ENCODE measurements at regions of chr4 and their contacts with region 1.

Region 1: DNA sequence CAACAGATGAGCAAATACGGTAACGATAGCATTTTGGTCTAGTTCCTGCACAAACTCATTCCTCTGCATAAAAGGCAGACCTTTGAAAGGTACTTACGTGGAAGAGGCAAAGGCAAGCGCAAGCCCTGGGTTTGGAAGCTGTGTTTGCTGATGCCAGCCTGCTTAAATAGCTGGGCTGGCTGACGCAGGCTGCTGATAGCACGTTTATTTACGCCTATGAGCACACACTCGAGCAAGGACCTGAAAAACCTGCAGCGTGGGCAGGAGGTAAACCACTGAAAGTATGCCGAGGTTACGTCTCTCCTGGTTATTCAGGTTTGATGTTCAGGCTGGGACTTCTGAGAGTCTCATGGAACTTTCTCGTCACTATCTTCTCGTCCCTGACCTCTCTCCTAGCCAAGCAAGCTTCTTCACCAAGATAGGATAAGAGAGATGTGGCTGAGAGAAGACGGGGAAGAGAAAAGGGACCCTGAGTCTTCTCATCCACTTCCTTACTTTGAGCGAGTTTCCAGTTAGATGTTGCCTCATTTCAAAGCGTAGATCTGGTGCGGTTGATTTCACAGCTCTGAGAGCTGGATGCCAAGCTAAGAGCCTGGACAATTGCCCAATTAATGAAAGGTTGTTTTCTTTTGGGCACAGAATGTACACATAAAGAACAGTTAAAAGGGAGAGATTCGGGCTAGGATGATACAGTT is at the start of gene HOPX:
- DNase-seq: peak; percentile 20
- H3K4me3 Mint-ChIP-seq: peak within 1 kb of the TSS; percentile 57
- H3K27ac Mint-ChIP-seq: peak within 1 kb of the TSS; percentile 5
- H3K4me1 Mint-ChIP-seq: peaks cover 41% of the 10 kb centered on the region
- H3K27me3 Mint-ChIP-seq: peaks cover 65% of the 10 kb centered on the region
- total RNA-seq, gene HOPX: 121 and 128 TPM in 2 replicates

Region 2: DNA sequence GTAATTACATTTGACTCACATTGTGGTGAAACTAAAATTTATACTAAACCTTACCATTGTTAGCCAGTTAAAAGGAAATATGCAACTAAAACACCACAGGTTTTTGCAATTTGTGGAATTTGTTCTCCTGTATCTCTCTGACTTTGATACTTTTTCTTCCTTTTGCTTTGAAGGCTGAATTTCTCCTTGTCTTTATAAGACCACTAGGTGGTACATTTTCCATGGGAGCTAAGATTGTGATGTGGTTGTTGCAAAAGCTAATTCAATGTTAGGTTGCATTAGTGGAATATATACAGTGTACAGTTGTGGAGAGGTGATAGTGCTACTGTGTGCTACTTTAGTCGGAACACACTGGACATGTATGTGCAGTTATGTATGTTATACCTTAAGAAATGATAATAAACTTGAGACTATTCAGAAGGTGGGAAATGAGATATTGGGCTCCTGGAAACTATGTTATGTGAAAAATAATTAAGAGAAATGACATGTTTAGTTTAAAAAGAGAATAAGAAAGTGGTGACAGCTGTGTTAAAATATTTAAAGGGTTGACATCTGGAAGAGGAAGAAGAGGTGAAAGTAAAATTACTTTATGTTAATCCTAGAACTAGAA is 105.4 kb before region 1 on chr4:
- intact Hi-C with region 1: loop called (anchors 5 kb)
- DNase-seq: no peak
- H3K4me3 Mint-ChIP-seq: no peak overlapping the region
- H3K27ac Mint-ChIP-seq: no peak overlapping the region
- H3K4me1 Mint-ChIP-seq: no peaks in the 10 kb centered on the region
- H3K27me3 Mint-ChIP-seq: peaks cover 11% of the 10 kb centered on the region

Region 3: GRCh38 chr4:56648021-56648823 is 33.1 kb before region 1 on chr4:
- intact Hi-C with region 1: loop called (anchors 1 kb)
- DNase-seq: no peak
- H3K4me3 Mint-ChIP-seq: peak overlapping the region; percentile 50
- H3K27ac Mint-ChIP-seq: peak overlapping the region; percentile 87
- H3K4me1 Mint-ChIP-seq: peaks cover 62% of the 10 kb centered on the region
- H3K27me3 Mint-ChIP-seq: peaks cover 2% of the 10 kb centered on the region

Region 4: DNA sequence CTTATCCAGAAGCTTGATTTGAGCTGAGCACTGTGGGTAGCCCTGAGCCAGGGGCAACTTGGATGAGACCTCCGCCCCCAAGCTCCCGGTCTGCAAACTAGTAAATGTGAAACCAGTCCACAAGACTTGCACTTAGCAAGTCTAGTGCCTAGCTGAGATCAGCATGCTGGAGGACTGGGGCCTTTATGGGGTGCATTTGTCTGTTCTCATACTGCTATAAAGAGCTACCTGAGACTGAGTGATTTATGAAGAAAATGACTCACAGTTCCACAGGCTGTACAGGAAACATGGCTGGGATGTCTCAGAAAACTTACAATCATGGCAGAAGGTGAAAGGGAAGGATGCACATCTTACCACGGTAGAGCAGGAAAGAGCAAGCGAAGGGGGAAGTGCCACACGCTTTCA is 41.9 kb after region 1 on chr4:
- intact Hi-C with region 1: loop called (anchors 1 kb)
- DNase-seq: peak; percentile 8
- H3K4me3 Mint-ChIP-seq: no peak overlapping the region
- H3K27ac Mint-ChIP-seq: peak overlapping the region; percentile 11
- H3K4me1 Mint-ChIP-seq: peaks cover 24% of the 10 kb centered on the region
- H3K27me3 Mint-ChIP-seq: no peaks in the 10 kb centered on the region

Region 5: GRCh38 chr4:56757821-56758411 is 76.6 kb after region 1 on chr4:
- intact Hi-C with region 1: loop called (anchors 1 kb)
- DNase-seq: peak; percentile 70
- H3K4me3 Mint-ChIP-seq: peak overlapping the region; percentile 74
- H3K27ac Mint-ChIP-seq: peak overlapping the region; percentile 98
- H3K4me1 Mint-ChIP-seq: peaks cover 48% of the 10 kb centered on the region
- H3K27me3 Mint-ChIP-seq: peaks cover 2% of the 10 kb centered on the region

Region 6: DNA sequence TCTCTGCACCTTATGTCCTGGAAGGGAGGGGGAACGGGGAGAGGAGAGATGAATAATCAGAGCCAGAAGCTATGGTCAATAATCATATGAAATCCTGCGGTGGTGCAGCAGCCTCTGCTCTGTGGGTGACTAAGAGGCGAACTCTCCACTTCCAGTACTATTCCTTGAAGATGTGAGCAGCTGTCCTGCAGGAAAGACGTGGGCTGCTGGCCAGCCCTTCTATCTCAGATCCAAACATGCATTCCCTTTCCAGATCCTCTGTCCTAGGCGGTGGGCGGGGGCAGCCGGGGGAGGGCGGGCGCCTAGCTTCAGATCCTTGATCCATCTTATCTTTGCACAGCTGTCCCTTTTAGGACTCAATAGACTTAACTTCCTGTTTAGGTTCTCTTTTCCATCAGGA is 105.7 kb after region 1 on chr4:
- intact Hi-C with region 1: no loop called
- DNase-seq: no peak
- H3K4me3 Mint-ChIP-seq: no peak overlapping the region
- H3K27ac Mint-ChIP-seq: no peak overlapping the region
- H3K4me1 Mint-ChIP-seq: no peaks in the 10 kb centered on the region
- H3K27me3 Mint-ChIP-seq: peaks cover 3% of the 10 kb centered on the region

Region 7: GRCh38 chr4:56821381-56822243 is 140.3 kb after region 1 on chr4 and contains the start of gene SPINK2:
- intact Hi-C with region 1: loop called (anchors 1 kb)
- DNase-seq: peak; percentile 44
- H3K4me3 Mint-ChIP-seq: peak within 1 kb of the TSS; percentile 45
- H3K27ac Mint-ChIP-seq: no peak within 1 kb of the TSS
- H3K4me1 Mint-ChIP-seq: peaks cover 29% of the 10 kb centered on the region
- H3K27me3 Mint-ChIP-seq: peaks cover 50% of the 10 kb centered on the region
- total RNA-seq, gene SPINK2: not detected in 2 replicates

Region 8: DNA sequence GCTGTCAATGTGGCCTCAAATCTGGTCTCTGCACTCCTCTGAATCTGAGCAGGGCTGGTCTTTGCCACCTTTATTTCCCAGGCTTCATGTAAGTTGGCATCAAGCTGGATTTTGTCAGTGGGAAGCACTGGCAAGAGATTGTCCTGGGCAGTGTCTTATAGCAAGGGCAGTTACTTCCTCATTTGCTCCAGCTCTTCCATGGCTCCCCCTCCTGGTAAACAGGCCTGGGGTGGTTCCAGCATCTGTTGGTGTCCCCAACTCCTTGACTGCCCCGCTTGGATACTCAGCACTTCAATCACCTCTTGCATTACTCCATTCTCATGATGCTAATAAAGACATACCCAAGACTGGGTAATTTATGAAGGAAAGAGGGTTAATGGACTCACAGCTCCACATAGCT is 211.4 kb after region 1 on chr4:
- intact Hi-C with region 1: no loop called
- DNase-seq: no peak
- H3K4me3 Mint-ChIP-seq: no peak overlapping the region
- H3K27ac Mint-ChIP-seq: no peak overlapping the region
- H3K4me1 Mint-ChIP-seq: no peaks in the 10 kb centered on the region
- H3K27me3 Mint-ChIP-seq: no peaks in the 10 kb centered on the region

Measured in activated T-helper 1 cell treated with anti-CD3 and anti-CD28 coated beads, Interleukin-12 subunit alpha, Interleukin-12 subunit beta, Interleukin-2, Interleukin-4 antibody, amounts not matched to agents 30 ng/mL and 10 ng/mL and 1 ng/mL, durations not matched to agents 14 hours and 24 hours and 36 hours (primary cell).